A549 (cell line): ENCODE measurements at regions of chr19 and their contacts with region 1.

Region 1: DNA sequence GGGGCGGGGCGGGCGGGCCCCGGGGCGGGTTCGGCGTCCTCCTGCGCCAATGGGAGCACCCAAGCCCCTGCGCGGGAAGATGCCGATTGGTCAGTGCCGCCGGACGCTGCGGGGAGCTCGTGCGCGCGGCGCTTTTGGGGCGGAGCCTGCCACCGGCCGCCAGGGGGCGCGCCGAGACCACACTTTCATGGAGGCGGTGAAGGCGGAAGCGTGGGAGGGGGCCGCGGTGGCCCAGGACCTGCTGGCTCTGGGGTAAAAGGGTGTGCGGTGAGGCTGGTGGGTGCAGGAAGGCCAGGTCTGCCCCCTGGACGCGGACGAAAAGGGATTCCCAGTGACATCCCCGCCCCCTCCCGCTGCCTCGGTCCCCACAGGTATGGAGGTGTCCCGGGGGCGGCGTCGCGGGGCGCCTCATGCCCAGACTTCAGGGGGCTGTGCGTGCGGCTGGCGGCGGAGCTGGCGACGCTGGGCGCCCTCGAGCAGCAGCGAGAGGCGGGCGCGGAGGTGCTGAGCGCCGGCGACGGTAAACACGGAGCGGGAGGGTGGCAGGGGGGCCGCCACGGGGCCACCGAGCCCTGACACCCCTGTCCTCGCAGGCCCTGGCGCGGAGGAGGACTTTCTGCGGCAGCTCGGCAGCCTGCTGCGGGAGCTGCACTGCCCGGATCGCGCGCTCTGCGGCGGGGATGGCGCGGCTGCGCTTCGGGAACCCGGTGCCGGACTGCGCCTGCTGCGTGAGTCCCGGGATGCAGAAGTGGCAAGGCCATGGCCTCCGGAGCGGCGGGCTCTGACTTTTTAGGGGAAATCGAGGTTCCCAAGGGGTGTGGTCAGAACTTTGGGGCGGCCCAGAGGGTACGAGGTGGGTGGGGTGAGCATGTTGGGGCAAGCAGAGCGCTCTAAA is at the start of gene FAM98C:
- DNase-seq: peak; percentile 99 to 100
- ATAC-seq: peak; percentile 93 to 98
- H3K4me3 ChIP-seq: peak within 1 kb of the TSS; percentile 66
- H3K27ac ChIP-seq: peak within 1 kb of the TSS; percentile 80 to 89
- H3K4me1 ChIP-seq: peaks cover 10% of the 10 kb centered on the region
- CTCF ChIP-seq: peak; percentile 100
- EP300 ChIP-seq: no peak
- POLR2A ChIP-seq: peak; percentile 72
- RAD21 ChIP-seq: peak; percentile 96 to 100
- polyA plus RNA-seq, gene FAM98C: 12.8 and 13.8 TPM in 2 replicates

Region 2: DNA sequence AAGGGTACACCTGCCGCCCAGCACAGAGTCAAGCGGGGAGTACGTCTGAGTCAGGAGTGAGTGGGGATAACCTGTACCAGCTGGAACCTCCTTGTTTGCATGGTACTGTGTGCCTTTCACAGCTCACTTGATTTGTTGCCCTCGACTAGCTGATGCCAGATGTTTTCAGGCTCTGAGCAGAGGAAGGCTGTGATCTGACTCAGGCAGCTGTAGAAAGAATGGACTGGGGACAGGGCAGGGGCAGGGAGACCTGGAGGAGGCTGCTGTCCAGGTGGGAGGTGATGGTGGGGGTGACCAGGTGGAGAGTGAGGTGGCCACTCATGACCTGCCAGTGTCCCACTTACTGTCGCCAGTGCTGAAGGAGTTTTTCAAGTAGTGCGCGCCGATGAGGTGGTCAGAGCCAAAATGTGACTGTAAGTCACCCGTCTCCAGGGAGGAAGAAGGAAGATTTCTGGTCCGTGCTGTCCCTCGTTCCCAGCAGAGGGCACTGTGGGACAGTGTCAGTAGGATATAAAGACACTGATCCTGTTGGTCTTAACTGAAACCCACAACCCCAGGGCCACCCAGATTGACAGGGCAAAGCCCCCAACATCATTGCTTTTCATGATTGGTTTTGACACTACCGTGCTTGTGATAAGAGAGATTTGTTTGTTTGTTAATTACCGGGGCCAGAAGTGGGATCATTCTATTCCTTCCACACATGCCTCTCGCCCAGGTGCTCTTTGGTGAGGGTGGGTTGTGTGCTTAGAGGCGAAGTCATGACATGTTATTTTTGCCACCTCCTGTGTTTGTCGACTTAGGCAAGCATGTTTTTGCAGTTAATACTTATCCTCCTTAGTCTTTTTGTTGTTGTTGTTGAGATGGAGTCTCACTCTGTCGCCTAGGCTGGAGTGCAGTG is 307.6 kb before region 1 on chr19:
- CTCF ChIA-PET with region 1: no interaction called
- POLR2A ChIA-PET with region 1: no interaction called
- DNase-seq: peak; percentile 86 to 87
- ATAC-seq: peak; percentile 87 to 89
- H3K4me3 ChIP-seq: no peak overlapping the region
- H3K27ac ChIP-seq: peak overlapping the region in 1 of 2 experiments; percentile 35; a peak in 1 of 6 replicates
- H3K4me1 ChIP-seq: no peaks in the 10 kb centered on the region
- CTCF ChIP-seq: peak; percentile 97
- EP300 ChIP-seq: no peak
- POLR2A ChIP-seq: peak; percentile 8; the same call in 1 of the 2 replicates
- RAD21 ChIP-seq: peak; percentile 82 to 83

Region 3: GRCh38 chr19:38122402-38123093 is 280.7 kb before region 1 on chr19:
- CTCF ChIA-PET with region 1: no interaction called
- POLR2A ChIA-PET with region 1: no interaction called
- DNase-seq: no peak
- ATAC-seq: peak; percentile 30 to 52
- H3K4me3 ChIP-seq: no peak overlapping the region
- H3K27ac ChIP-seq: no peak overlapping the region
- H3K4me1 ChIP-seq: no peaks in the 10 kb centered on the region
- CTCF ChIP-seq: no peak
- EP300 ChIP-seq: no peak
- POLR2A ChIP-seq: no peak
- RAD21 ChIP-seq: no peak

Region 4: GRCh38 chr19:38239816-38240215 is 163.4 kb before region 1 on chr19:
- CTCF ChIA-PET with region 1: interaction called, 14 read pairs
- POLR2A ChIA-PET with region 1: no interaction called
- DNase-seq: no peak
- ATAC-seq: no peak
- H3K4me3 ChIP-seq: no peak overlapping the region
- H3K27ac ChIP-seq: no peak overlapping the region
- H3K4me1 ChIP-seq: no peaks in the 10 kb centered on the region
- CTCF ChIP-seq: no peak
- EP300 ChIP-seq: no peak
- POLR2A ChIP-seq: no peak
- RAD21 ChIP-seq: no peak

Region 5: DNA sequence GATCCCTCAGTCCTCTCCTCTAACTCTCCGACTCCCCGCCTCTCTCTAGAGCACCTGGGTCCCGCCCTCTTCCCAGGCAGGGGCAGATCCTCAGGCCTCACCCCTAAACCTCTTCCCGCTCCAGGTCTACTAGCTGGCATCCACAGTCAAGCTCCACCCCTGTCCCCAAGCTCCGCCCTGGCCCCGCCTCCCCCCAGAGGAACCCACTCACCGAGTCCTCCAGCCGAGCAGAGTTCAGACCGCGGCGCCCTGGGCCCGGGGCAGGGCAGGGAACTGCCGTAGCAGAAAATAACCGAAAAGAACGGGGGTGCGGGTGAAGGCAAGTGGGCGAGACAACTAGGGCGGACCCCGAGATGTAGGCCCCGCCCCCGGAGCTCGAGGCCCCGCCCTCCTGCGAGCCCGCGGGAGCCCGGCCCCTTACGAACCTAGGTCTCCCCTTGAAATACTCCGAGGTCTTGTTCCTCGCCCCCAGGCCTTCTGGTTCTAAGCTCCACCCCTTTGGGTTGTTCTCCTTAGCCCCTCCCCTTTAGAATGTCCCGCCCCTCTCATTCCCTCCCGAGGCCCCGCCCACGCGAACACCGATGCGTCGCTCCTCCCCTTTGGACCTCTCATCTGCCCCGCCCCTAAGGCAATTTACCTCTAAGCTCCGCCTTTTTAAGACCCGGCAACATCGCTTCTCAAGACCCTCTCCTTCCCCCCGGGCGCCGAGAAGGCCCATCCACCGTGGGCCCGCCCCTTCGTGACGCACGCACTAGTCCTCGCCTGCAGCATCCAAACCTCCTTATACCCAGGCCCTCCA is 15.5 kb before region 1 on chr19 and contains the start of gene GGN:
- CTCF ChIA-PET with region 1: interaction called, 254 read pairs
- POLR2A ChIA-PET with region 1: interaction called, 21 read pairs
- DNase-seq: peak; percentile 98 to 100
- ATAC-seq: peak; percentile 53 to 78
- H3K4me3 ChIP-seq: peak within 1 kb of the TSS; percentile 61
- H3K27ac ChIP-seq: peak within 1 kb of the TSS; percentile 71 to 90
- H3K4me1 ChIP-seq: peaks cover 35% of the 10 kb centered on the region
- CTCF ChIP-seq: no peak
- EP300 ChIP-seq: no peak
- POLR2A ChIP-seq: no peak; the same call in 1 of the 2 replicates
- RAD21 ChIP-seq: no peak
- polyA plus RNA-seq, gene GGN: not detected in 2 replicates

Region 6: GRCh38 chr19:38478273-38478967 is 75.2 kb after region 1 on chr19:
- CTCF ChIA-PET with region 1: interaction called, 30 read pairs
- POLR2A ChIA-PET with region 1: interaction called, 3 read pairs
- DNase-seq: peak; percentile 79 to 90
- ATAC-seq: peak; percentile 83 to 91
- H3K4me3 ChIP-seq: no peak overlapping the region
- H3K27ac ChIP-seq: no peak overlapping the region
- H3K4me1 ChIP-seq: no peaks in the 10 kb centered on the region
- CTCF ChIP-seq: peak; percentile 65
- EP300 ChIP-seq: no peak
- POLR2A ChIP-seq: no peak
- RAD21 ChIP-seq: peak; percentile 75 to 92

Region 7: DNA sequence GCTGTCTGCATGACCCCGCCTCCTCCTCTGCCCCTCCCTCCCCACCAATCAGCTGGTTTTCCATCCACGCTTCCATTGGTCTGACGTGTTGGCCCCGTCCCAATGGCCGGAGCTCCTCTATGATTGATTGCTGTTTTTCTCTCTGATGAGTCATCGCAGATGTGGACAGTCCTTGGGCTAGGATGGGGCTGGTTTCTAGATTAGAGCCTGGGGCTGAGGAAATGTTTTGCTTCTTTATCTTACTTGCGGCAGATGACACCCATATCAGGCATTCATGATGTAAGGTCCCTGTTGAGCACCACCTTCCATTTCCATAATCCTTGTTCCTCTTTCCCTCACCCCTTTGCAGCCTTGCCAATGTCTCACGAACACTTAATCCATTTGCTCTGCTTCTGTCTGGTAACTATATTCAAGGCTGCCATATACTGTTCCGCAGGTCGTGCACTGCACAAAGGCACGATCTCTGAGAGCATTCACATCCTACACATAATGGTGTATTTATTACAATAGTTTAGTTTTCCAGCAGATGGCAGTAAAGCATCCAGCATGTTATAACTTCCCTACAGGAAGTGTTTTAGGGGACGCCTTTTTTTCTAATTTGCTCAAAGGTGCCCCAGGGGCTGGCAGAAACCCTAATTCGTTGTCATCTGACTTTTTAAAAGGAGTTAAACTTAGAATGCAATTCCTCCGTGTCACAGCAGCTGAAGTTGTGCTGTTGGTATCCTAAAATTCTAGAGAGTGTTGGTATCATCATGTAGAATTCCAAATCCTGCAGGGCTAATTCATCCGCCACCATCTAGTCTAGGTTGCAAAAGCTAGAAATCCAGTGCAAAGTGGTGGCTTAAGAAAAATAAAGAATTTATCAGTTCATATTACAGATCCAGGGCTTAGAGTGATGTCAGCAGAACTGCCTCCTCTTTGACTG is 141.1 kb after region 1 on chr19:
- CTCF ChIA-PET with region 1: interaction called, 19 read pairs
- POLR2A ChIA-PET with region 1: no interaction called
- DNase-seq: peak; percentile 96 to 98
- ATAC-seq: peak; percentile 89 to 93
- H3K4me3 ChIP-seq: peak overlapping the region; percentile 37
- H3K27ac ChIP-seq: peak overlapping the region; percentile 59 to 69
- H3K4me1 ChIP-seq: peaks cover 14% of the 10 kb centered on the region
- CTCF ChIP-seq: peak; percentile 100
- EP300 ChIP-seq: no peak
- POLR2A ChIP-seq: no peak
- RAD21 ChIP-seq: peak; percentile 99

Region 8: DNA sequence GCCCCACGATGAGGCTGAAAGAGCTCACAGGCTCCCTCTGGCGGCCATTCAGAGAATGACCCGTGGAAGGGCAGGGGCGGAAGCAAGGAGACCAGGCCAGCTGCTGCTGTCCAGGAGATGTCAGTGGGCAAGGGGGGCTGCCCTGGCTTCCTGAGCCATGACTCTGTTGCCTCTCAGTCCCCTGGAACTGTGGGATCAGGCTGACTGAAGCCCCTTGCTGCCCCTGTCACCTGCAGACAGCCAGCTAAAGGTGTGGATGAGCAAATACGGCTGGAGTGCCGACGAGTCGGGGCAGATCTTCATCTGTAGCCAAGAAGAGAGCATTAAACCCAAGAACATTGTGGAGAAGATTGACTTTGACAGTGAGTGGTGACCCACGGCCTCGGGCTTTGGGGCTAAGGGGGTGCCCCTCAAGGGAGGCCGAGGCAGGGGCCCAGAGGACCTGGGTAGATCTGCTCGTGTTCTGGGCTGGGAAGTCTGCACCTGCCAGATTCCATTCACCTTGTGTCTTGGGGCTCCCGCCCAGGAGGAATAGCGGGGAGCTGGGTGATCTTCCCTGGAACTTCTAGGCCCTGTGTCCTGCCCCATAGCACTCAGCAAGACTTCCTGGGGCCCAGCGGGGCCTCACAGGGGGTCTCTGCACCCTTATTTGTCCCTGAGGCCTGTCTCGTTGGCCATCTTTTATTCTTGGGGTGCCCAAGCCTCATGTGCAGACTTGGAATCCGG is 231.7 kb after region 1 on chr19:
- CTCF ChIA-PET with region 1: interaction called, 172 read pairs
- POLR2A ChIA-PET with region 1: interaction called, 4 read pairs
- DNase-seq: peak; percentile 80 to 93
- ATAC-seq: peak; percentile 58 to 64; a peak in 5 of 6 replicates
- H3K4me3 ChIP-seq: no peak overlapping the region
- H3K27ac ChIP-seq: peak overlapping the region; percentile 9 to 77; a peak in 3 of 6 replicates
- H3K4me1 ChIP-seq: peaks cover 55% of the 10 kb centered on the region
- CTCF ChIP-seq: peak; percentile 99
- EP300 ChIP-seq: no peak
- POLR2A ChIP-seq: no peak
- RAD21 ChIP-seq: peak; percentile 82 to 88

Region 9: DNA sequence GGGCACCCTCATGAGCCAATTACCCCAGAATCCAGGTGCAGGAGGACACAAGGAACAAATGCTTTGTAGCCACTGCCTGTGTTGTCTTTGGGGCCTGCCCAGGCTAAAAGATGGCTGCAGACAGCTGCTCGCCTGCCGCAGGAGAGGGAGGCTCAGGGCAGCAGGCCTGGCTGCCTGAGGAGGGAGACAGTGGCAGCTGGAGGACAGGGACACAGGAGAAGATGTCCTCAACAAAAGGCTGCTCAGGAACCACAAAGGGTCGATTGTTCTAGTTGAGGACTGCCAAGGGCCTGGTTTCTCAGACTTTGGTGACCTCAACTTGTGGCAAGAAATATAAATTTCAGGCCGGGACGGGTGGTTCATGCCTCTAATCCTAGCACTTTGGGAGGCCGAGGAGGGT is 488.6 kb after region 1 on chr19:
- CTCF ChIA-PET with region 1: interaction called, 10 read pairs
- POLR2A ChIA-PET with region 1: no interaction called
- DNase-seq: no peak
- ATAC-seq: no peak
- H3K4me3 ChIP-seq: no peak overlapping the region
- H3K27ac ChIP-seq: no peak overlapping the region
- H3K4me1 ChIP-seq: no peaks in the 10 kb centered on the region
- CTCF ChIP-seq: no peak
- EP300 ChIP-seq: no peak
- POLR2A ChIP-seq: no peak
- RAD21 ChIP-seq: no peak